ENCODE measurements at regions of chr4 and their contacts with region 1.

Region 1: DNA sequence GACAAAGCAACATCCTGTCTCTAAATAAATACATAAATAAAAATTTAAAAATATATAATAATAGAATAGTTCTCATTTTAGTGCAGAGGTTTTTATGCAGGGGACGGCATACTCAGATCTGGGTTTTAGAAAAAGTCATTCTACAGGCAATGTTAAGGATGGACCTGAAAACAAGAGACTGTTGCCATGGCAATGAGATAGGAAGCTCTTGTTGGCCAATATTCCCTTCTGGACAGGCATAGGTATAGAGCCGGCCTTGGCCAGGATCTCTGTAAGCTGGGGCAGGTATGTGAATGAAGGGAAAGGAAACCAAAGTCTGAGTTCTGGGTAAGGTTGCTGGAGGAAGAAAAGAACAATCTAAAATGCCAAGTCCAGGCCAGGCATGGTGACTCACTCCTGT is 187.4 kb upstream of the JADE1 start:
- DNase-seq: no peak
- H3K4me3 ChIP-seq: no peak overlapping the region
- H3K27me3 ChIP-seq: no peaks in the 10 kb centered on the region
- CTCF ChIP-seq: no peak

Region 2: GRCh38 chr4:127870688-127871087 is 751.4 kb before region 1 on chr4:
- CTCF ChIA-PET with region 1: no interaction called
- POLR2A ChIA-PET with region 1: no interaction called
- DNase-seq: peak; percentile 76
- H3K4me3 ChIP-seq: no peak overlapping the region
- H3K27me3 ChIP-seq: no peaks in the 10 kb centered on the region
- CTCF ChIP-seq: no peak

Region 3: DNA sequence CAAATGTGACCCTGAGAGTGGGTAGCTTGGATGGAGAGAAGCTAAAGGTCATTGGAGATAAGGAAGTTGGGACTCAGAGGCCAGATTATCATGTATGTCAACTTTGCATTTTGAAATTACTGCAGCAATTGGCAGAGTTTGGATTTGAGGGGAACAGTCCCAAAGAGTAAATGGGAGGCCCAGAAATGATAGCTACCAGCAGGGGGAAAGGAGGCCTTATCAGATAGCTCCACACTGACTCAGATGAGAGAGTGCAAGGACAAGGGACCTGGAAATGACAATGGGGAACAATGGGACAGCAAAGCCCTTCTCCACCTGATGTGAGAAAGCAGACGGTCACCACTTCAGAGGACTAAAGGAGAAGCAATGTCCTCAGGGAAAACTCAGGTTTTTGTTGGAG is 14.1 kb before region 1 on chr4:
- CTCF ChIA-PET with region 1: no interaction called
- POLR2A ChIA-PET with region 1: no interaction called
- DNase-seq: no peak
- H3K4me3 ChIP-seq: no peak overlapping the region
- H3K27me3 ChIP-seq: no peaks in the 10 kb centered on the region
- CTCF ChIP-seq: no peak

Region 4: GRCh38 chr4:128684031-128684430 is 62.0 kb after region 1 on chr4:
- CTCF ChIA-PET with region 1: no interaction called
- POLR2A ChIA-PET with region 1: interaction called, 10 read pairs
- DNase-seq: no peak
- H3K4me3 ChIP-seq: no peak overlapping the region
- H3K27me3 ChIP-seq: no peaks in the 10 kb centered on the region
- CTCF ChIP-seq: no peak

Region 5: GRCh38 chr4:128707864-128708263 is 85.8 kb after region 1 on chr4:
- CTCF ChIA-PET with region 1: no interaction called
- POLR2A ChIA-PET with region 1: no interaction called
- DNase-seq: peak; percentile 19
- H3K4me3 ChIP-seq: peak overlapping the region; percentile 6; the same call in 1 of the 2 replicates
- H3K27me3 ChIP-seq: no peaks in the 10 kb centered on the region
- CTCF ChIP-seq: no peak

Measured in BJ (cell line).